Activated CD4-positive, alpha-beta memory T cell treated with anti-CD3 and anti-CD28 coated beads, Interleukin-2, amount 10 ng/mL, durations not matched to agents 7 days and 5 days (primary cell): ENCODE measurements at regions of chr6 and their contacts with region 1.

Region 1: DNA sequence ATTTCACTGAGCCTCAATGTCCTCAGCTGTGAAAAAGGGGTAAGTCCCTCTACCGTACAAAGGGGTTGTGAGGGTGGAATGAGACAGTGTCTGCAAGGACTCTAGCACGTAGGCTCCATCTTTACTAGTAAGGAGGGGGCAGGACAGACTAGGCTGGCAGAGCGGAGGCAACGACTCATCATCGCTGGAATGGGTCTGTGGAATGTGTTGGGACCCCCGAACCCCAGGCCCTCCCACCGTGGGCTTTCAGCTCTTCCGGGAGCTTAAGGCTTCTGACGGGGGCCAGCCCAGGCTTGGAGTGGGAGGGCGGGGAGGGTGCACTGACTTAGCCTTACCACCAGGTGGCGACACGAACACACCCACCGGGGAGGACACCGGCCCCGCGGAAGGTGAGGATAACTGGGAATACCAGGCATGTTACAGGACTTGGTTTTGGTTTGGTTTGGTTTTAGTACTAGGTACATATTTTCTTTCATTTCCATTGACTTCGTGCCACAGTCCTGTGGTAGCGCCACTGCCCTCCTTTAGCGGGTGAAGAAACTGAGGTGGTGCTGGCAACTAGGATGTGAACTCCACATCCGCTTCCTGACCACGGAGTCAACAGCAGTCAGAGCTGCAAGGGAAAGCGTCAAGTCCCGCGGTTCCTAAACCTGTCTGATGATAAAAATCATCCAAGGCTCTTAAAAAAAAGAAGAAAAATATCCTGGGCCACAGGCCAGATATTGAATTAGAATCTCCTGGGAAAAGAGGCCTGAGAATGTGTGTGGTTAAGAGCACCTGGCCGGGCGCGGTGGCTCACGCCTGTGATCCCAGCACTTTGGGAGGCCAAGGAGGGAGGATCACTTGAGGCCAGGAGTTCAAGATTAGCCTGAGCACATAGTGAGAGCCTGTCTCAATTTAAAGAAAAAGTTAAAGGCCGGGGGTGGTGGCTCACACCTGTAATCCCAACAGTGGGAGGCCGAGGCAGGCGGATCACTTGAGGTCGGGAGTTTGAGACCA is 10.3 kb upstream of the TULP1 start:
- DNase-seq: peak; percentile 80
- H3K4me3 Mint-ChIP-seq: peak overlapping the region; percentile 55
- H3K27ac Mint-ChIP-seq: peak overlapping the region; percentile 72
- H3K4me1 Mint-ChIP-seq: peaks cover 22% of the 10 kb centered on the region
- H3K27me3 Mint-ChIP-seq: peaks cover 8% of the 10 kb centered on the region

Region 2: GRCh38 chr6:35427851-35428321 is 95.1 kb before region 1 on chr6:
- CTCF ChIA-PET with region 1: no interaction called
- POLR2A ChIA-PET with region 1: no interaction called
- DNase-seq: no peak
- H3K4me3 Mint-ChIP-seq: no peak overlapping the region
- H3K27ac Mint-ChIP-seq: no peak overlapping the region
- H3K4me1 Mint-ChIP-seq: no peaks in the 10 kb centered on the region
- H3K27me3 Mint-ChIP-seq: no peaks in the 10 kb centered on the region

Region 3: DNA sequence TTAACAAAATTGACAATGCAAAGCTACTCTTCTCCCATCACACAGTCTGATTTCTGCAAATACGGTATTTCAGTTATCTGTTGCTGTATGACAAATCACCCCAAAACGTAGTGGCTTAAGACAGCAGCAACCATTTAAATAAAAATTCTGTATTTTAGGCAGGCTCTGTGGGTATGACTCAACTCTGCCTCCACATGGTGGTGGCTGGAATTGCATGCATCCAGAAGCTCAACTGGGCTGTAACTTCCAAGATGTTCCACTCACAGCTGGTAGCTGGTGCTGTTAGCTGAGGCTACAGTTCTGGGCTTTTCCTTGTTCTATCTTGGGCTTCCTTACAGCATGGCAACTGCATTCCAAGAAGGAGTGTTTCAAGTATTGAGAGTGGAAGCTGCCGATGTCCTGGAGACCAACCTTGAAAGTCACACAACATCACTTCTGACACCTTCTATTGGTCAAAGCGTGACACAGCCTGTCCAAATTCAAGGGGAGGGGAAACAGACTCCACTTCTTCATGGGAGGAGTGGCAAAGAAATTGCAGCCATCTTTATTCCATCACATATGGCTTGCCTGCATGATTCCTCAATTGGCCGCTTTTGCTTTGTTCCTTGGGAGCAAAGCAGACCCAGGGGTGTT is 29.4 kb after region 1 on chr6:
- CTCF ChIA-PET with region 1: interaction called, 55 read pairs
- POLR2A ChIA-PET with region 1: no interaction called
- DNase-seq: peak; percentile 76
- H3K4me3 Mint-ChIP-seq: no peak overlapping the region
- H3K27ac Mint-ChIP-seq: no peak overlapping the region
- H3K4me1 Mint-ChIP-seq: peaks cover 4% of the 10 kb centered on the region
- H3K27me3 Mint-ChIP-seq: peaks cover 14% of the 10 kb centered on the region